ENCODE measurements at regions of chr12 and their contacts with region 1.

Region 1: DNA sequence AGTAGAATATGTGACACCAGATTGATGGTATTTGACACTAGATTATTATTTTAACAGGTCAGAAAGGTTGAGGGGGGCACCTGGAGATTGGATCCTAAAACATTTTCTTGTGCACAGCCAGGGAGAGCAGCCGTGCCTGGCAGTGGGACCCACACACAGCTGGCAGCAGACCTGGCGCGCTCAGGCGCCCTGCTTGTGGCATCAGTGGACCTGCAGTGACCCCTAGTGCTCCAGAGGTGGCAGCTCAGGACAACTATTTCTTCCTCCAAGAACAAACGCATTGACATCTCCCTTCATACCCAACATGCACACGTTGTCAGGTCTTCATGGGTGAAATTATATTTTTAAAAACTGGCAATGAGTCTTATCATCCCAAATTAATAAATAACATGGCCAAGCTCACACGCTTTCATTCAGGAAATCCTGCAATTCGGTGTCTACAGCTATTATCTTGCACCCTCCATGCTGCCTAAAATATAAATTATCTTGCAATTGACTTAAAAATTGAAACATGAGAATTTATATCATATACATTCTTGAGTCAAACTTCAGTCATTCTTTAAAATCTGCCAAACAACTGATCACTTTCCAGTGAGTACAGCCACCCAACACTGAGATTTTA is 7.7 kb upstream of the TMEM132D start:
- DNase-seq: peak; percentile 66
- ATAC-seq: no peak
- H3K4me3 Mint-ChIP-seq: no peak overlapping the region
- H3K27ac Mint-ChIP-seq: no peak overlapping the region
- H3K4me1 Mint-ChIP-seq: no peaks in the 10 kb centered on the region
- H3K27me3 Mint-ChIP-seq: peaks cover 4% of the 10 kb centered on the region

Region 2: DNA sequence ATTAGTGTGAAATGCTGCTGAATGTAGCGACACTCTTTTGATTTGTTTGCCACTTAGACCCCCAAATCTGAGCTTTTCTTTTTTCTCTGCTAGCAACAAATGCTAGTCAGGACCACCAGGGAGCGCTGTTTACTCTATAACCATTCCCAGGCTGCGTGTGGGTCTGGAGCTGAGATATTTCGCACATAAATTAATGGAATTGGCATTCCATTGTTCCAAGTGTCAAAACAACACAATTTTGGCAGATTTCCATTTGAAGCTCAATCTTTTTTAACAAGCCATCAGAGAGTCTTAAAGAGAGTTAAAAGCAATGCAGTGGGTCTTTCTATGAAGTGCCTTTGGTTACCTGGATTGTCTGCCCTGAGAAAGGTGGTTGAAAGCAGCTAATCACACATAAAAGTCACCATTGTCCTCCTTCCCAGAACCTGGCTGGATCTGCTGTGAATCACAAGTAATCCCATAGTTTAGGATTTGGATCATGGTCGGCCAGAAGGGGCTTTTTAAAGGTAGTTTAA is 1651.9 kb before region 1 on chr12:
- CTCF ChIA-PET with region 1: interaction called, 3 read pairs
- POLR2A ChIA-PET with region 1: no interaction called
- intact Hi-C with region 1: loop called in 1 of 2 experiments (anchors 2 kb)
- DNase-seq: peak; percentile 41
- ATAC-seq: no peak
- H3K4me3 Mint-ChIP-seq: no peak overlapping the region
- H3K27ac Mint-ChIP-seq: no peak overlapping the region
- H3K4me1 Mint-ChIP-seq: no peaks in the 10 kb centered on the region
- H3K27me3 Mint-ChIP-seq: peaks cover 9% of the 10 kb centered on the region

Region 3: DNA sequence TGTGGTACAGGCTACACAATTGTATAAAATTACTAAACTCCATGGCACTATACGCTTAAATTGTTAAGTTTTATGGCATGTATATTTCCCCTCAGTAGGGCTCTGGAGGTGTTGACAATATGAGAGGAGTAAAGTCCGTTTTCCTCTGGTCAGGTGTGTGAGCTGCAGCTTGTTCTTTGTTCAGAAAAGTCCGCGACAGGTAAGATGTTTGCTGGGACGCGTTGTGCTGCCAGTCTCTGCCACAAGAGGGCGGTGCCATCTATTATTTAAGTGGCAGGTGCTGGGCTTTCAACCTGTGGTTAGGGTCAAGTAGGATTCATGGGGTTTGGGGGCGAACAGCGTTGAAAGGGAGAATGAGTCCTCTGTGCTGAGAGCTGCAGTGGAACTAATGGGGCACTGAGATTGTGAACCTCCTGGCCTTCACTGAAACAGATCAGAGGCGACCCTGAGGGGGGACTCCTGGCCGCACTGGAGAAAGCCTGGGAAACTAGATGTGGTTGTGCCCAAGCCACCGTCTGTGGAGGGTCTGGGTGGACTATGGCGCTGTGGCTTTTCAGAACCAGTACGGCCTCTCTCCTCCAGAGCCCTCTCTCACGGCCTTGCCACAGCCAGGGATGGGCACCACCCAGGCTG is 1266.8 kb before region 1 on chr12:
- CTCF ChIA-PET with region 1: interaction called, 4 read pairs
- POLR2A ChIA-PET with region 1: no interaction called
- intact Hi-C with region 1: loop called in 1 of 2 experiments (anchors 1 kb)
- DNase-seq: peak; percentile 62
- ATAC-seq: no peak
- H3K4me3 Mint-ChIP-seq: no peak overlapping the region
- H3K27ac Mint-ChIP-seq: no peak overlapping the region
- H3K4me1 Mint-ChIP-seq: no peaks in the 10 kb centered on the region
- H3K27me3 Mint-ChIP-seq: peaks cover 2% of the 10 kb centered on the region

Region 4: GRCh38 chr12:128969480-128970055 is 942.0 kb before region 1 on chr12:
- CTCF ChIA-PET with region 1: interaction called, 3 read pairs
- POLR2A ChIA-PET with region 1: no interaction called
- intact Hi-C with region 1: loop called in 1 of 2 experiments (anchors 2 kb)
- DNase-seq: peak; percentile 64
- ATAC-seq: peak; percentile 90
- H3K4me3 Mint-ChIP-seq: no peak overlapping the region
- H3K27ac Mint-ChIP-seq: no peak overlapping the region
- H3K4me1 Mint-ChIP-seq: peaks cover 5% of the 10 kb centered on the region
- H3K27me3 Mint-ChIP-seq: peaks cover 14% of the 10 kb centered on the region

Region 5: DNA sequence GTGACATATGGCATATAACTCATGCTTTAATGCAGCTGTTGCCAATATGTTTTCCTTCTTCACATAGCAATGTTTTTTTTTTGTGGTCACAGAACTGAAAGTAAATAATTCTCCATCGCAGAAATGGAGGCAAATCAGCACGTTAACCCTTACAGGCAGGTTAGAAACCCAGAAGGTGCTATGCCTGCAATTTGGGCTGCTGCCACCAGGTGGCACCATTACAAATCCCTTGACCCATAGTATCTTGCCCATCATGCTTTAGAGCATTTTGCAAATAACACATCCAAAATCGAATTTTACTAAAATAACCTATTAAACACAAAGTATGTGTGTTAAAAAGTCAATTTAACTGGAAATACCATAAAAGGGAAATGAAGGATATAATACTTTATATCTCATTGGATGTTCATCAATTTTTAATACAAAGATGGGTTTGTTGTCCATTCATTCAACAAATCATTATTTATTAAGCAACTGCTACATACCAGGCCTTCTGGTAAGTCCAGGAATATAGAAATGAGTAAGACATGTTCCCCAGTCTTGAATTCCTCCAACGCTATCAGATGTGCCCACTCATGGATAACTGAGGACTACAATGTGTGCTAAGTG is 718.2 kb before region 1 on chr12:
- CTCF ChIA-PET with region 1: interaction called, 3 read pairs
- POLR2A ChIA-PET with region 1: no interaction called
- intact Hi-C with region 1: loop called (anchors 1 to 5 kb)
- DNase-seq: peak; percentile 47
- ATAC-seq: no peak
- H3K4me3 Mint-ChIP-seq: no peak overlapping the region
- H3K27ac Mint-ChIP-seq: no peak overlapping the region
- H3K4me1 Mint-ChIP-seq: no peaks in the 10 kb centered on the region
- H3K27me3 Mint-ChIP-seq: no peaks in the 10 kb centered on the region

Region 6: DNA sequence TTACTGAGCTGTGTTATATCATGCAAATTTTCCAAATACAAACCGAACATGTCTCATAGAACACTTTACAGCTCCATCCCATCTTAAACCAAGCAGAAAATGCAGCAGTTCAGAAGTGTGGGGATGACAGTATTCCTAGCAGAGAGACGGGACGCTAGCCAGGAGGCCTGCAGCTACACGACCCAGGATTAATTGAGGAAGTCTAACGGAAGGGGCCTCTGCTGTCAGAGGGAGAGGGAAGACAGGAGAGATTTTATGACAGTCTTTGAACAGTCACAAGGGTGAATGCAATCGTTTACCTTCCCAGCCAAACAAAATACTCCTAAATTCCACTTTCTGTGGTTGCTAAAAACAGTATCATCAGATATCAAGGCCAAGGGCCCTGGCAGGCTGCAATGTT is 269.6 kb before region 1 on chr12:
- CTCF ChIA-PET with region 1: no interaction called
- POLR2A ChIA-PET with region 1: no interaction called
- intact Hi-C with region 1: no loop called
- DNase-seq: no peak
- ATAC-seq: no peak
- H3K4me3 Mint-ChIP-seq: no peak overlapping the region
- H3K27ac Mint-ChIP-seq: no peak overlapping the region
- H3K4me1 Mint-ChIP-seq: no peaks in the 10 kb centered on the region
- H3K27me3 Mint-ChIP-seq: no peaks in the 10 kb centered on the region

Region 7: DNA sequence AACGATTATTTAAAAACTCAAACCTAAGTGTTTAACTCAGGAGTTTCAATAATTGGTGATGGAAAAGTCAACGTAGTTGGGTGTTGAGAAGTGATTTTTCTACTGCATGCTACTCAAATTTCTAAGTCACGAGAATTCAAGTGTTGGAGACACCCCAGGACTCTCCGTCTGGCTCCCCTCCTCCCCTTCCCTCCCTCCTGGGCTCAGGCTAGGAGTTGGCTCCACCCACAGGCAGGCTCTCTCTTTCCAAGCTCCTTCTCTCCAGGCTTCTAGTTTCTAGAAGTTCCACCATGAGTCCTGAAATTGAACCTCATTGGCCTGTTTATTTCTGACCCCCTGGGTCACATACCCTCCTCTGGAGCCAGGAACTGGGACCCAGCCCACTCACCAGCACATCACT is 80.7 kb before region 1 on chr12:
- CTCF ChIA-PET with region 1: no interaction called
- POLR2A ChIA-PET with region 1: no interaction called
- intact Hi-C with region 1: no loop called
- DNase-seq: no peak
- ATAC-seq: no peak
- H3K4me3 Mint-ChIP-seq: no peak overlapping the region
- H3K27ac Mint-ChIP-seq: no peak overlapping the region
- H3K4me1 Mint-ChIP-seq: no peaks in the 10 kb centered on the region
- H3K27me3 Mint-ChIP-seq: no peaks in the 10 kb centered on the region